ENCODE measurements at regions of chr4 and their contacts with region 1.

Region 1: DNA sequence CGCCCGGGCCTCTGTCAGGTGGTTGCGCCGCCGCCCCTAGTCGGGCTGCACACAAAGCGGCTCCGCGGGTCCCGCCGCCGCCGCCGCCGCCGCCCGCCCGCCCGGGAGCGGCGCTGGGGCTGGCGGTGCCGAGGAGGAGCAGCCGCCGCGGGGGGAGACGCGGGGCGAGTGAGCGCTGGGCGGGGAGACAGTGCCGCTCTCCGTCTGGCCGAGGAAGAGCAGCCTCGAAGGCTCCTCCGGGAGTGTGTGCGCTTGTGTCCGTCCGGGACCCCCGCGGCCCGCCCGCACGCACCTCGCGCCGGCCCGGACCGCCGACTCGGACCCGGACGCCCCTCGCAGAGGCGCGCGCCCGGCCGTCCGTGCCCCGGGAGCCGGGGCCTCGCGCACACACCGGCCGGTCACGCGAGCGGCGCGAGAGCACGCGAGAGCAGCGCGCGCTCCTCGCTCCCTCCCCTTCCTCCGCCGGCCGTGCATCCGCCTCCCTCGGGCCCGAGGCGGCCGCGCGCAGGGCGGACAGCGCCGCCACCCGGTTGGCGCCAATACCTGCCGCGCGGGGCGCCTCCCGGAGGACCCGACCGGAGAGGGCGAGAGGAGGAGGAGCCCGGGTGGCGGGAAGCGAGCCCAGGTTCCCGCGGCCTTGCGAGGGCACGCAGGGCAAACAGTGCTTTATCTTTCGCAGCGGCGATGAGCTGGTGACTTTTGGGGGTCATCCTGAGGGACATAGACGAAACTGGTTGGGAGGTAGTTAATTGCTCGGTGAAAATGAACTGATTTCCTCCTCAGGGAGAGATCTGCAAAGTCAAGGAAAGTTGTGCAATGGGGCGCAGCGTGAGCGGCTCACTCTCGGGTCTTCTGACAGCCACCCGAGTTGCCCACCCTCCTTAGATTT is at the start of gene PDS5A:
- DNase-seq: peak; percentile 92
- ATAC-seq: peak; percentile 93
- total RNA-seq, gene PDS5A: 65.8 TPM

Region 2: GRCh38 chr4:39638354-39639240 is 339.1 kb before region 1 on chr4 and contains the start of gene SMIM14:
- intact Hi-C with region 1: loop called (anchors 10 kb)
- DNase-seq: peak; percentile 99
- ATAC-seq: peak; percentile 98
- total RNA-seq, gene SMIM14: 32.1 TPM

Region 3: GRCh38 chr4:39697740-39698423 is 279.9 kb before region 1 on chr4 and contains the start of gene UBE2K:
- intact Hi-C with region 1: loop called (anchors 10 kb)
- DNase-seq: peak; percentile 92
- ATAC-seq: peak; percentile 97
- total RNA-seq, gene UBE2K: 51.0 TPM

Measured in sciatic nerve (tissue), 2 donors.